ENCODE measurements at regions of chr3 and their contacts with region 1.

Region 1: GRCh38 chr3:161393803-161394202 is 22.5 kb upstream of the SPTSSB start:
- DNase-seq: no peak
- H3K4me3 Mint-ChIP-seq: no peak overlapping the region
- H3K27ac Mint-ChIP-seq: no peak overlapping the region
- H3K4me1 Mint-ChIP-seq: peaks cover 55% of the 10 kb centered on the region
- H3K27me3 Mint-ChIP-seq: no peaks in the 10 kb centered on the region

Region 2: GRCh38 chr3:160565442-160566403 is 828.1 kb before region 1 on chr3 and contains the start of gene KPNA4:
- CTCF ChIA-PET with region 1: no interaction called
- intact Hi-C with region 1: loop called (anchors 5 kb)
- DNase-seq: peak; percentile 97
- H3K4me3 Mint-ChIP-seq: peak within 1 kb of the TSS; percentile 93
- H3K27ac Mint-ChIP-seq: peak within 1 kb of the TSS; percentile 97
- H3K4me1 Mint-ChIP-seq: peaks cover 40% of the 10 kb centered on the region
- H3K27me3 Mint-ChIP-seq: no peaks in the 10 kb centered on the region
- total RNA-seq, gene KPNA4: 43.2 to 59.4 TPM

Region 3: DNA sequence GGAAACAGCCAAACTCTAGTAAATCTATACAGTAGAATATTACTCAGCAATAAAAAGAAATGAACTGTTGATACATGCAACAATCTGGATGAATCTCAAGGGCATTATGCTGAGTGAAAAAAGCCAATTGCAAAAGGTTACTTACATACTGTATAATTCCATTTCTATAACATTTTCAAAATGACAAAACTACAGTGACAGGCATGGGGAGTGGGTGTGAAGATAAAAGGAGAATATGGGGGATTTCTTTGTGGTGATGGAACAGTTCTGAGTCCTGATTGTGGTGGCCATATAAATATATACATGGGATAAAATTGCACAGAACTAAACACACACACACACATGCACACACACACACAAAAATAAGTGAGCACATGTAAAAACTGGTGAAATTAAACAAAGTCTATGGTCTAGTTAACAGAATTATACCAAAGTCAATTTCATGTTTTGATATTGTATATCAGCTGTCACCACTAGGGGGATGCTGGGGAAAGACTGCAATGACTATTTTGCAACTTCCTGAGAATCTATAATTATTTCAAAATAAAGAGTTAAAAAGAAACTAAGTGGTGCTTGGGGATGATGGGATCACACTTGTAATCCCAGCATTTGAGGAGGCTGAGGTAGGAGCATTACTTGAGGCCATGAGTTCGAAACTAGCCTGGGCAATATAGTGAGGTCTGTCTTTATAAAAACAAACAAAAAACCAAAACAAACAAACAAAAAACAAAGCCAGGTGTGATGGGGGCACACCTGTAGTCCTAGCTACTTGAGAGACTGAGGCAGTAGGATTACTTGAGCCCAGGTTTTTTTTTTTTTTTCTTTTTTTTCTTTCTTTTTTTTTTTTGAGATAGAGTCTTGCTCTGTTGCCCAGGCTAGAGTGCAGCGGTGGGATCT is 88.5 kb before region 1 on chr3:
- CTCF ChIA-PET with region 1: interaction called, 11 read pairs
- intact Hi-C with region 1: no loop called
- DNase-seq: peak; percentile 12
- H3K4me3 Mint-ChIP-seq: no peak overlapping the region
- H3K27ac Mint-ChIP-seq: no peak overlapping the region
- H3K4me1 Mint-ChIP-seq: peaks cover 22% of the 10 kb centered on the region
- H3K27me3 Mint-ChIP-seq: no peaks in the 10 kb centered on the region

Region 4: DNA sequence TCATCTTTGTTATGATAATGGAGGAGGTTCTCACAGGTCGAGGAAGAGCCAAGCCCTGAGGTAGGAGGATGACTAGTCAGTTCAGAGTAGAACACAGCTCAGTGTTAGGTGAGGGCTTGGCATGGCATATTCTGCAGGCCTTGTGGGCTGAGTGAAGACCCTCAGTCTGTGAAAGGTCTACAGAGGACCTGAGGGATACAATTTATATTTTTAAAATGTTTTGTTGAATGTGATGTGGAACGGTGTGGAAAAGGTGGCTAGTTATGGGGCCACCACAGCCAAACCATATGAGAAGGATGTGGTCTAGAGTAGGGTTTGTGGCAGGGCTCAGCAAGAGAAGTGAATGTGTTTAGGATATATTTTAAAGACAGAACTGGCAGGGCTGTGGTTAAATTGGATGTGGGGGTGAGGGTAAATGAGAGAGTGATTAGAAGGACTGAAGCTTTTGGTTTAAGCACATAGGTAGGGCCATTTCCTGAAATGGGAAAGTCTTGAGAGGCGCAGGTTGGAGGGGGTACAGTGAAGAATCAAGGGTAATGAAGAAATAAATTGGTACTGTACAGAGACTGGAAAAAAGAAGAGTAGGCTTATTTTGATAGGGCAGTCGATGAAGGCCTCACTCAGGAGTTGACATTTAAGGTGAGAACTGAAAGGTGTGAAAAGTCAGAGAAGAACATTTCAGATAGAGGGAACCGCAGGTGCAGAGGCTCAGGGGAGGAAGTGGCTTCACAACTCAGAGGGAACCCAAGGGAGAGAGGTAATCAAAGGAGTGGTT is 83.0 kb before region 1 on chr3:
- CTCF ChIA-PET with region 1: interaction called, 11 read pairs
- intact Hi-C with region 1: loop called (anchors 1 kb)
- DNase-seq: peak; percentile 69
- H3K4me3 Mint-ChIP-seq: no peak overlapping the region
- H3K27ac Mint-ChIP-seq: peak overlapping the region; percentile 43
- H3K4me1 Mint-ChIP-seq: peaks cover 49% of the 10 kb centered on the region
- H3K27me3 Mint-ChIP-seq: no peaks in the 10 kb centered on the region

Region 5: DNA sequence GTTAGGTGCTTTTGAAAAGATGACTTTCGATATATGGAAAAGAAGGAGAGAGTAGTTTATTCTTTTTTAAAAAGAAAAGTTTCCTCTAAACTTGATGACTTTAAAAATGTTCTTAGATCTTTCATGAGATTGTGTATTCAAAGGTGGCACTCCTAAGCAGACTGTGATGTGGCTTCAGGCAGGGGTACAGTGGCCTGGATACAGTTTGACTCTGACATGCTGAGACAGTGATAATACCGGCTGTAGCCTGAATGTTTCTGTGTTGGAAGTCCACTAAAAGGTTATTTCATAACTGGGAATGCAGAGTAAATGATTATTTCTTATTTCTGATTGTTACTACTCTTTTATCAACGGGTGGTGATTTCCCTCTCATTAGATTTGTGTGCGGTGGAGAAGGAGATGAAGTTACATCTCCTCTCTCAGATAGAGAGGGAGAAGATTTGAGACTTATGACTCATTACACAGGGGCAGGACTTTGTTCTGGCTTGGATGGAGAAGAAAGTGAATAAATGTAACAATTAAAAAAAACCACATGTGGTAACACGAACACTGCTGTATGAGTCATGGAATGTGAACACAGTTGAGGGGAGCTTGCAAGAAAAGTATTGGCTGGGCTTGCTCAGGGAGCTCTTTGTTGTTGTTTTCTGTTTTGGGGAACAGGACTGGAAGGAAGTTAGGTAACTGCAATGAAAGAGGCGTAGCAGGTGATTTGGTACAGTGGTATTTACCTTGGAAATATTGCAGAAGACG is 44.1 kb before region 1 on chr3:
- CTCF ChIA-PET with region 1: interaction called, 4 read pairs
- intact Hi-C with region 1: loop called (anchors 1 kb)
- DNase-seq: peak; percentile 47
- H3K4me3 Mint-ChIP-seq: no peak overlapping the region
- H3K27ac Mint-ChIP-seq: no peak overlapping the region
- H3K4me1 Mint-ChIP-seq: peaks cover 27% of the 10 kb centered on the region
- H3K27me3 Mint-ChIP-seq: no peaks in the 10 kb centered on the region

Region 6: DNA sequence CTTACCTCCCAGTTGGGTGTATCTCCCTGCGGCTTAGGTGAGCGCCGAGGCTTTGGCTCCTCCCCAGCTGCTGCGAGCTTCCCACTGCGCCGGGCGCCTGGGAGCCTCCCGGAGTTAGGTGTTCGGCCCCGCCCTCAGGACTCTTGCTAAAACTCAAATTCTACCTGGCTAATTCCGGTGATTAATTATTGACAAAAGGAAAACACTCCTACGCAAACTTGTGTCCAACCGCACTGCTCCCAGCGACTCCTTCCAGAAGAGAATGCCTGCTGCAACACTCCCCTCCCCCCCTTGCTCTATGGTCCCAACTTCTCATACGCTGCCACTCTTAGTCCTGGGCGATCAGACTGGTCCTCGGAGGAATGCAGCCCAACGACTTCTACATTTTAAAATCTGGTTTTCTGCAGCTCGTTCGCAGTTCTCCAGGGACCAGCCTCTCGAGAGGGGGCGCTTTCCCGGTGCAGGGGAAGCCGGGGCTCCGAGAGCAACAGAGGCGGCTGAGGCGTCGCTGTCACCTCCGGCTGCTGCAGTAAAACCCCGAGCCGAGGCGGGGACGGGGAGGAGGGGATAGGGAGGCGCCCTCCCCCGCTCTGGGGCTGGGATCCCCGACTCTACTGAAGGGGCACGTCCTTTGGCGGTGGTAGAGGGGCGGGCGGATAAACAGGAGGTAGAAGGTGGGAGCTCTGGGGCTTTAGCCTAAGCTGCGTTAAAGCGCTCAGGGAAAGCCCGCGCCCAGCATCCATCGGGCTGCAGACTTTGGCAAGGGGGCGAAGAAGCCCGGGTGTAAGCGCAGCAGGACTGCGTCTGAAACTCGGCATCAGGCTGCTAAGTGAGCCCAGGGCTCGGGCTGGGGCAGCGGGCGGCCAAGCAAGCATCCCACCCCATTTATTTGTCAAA is 22.1 kb before region 1 on chr3 and contains the start of gene SPTSSB:
- CTCF ChIA-PET with region 1: no interaction called
- intact Hi-C with region 1: loop called (anchors 1 kb)
- DNase-seq: peak; percentile 60
- H3K4me3 Mint-ChIP-seq: peak within 1 kb of the TSS; percentile 79
- H3K27ac Mint-ChIP-seq: no peak within 1 kb of the TSS
- H3K4me1 Mint-ChIP-seq: peaks cover 8% of the 10 kb centered on the region
- H3K27me3 Mint-ChIP-seq: peaks cover 22% of the 10 kb centered on the region
- total RNA-seq, gene SPTSSB: not detected

Region 7: GRCh38 chr3:161454615-161455014 is 60.8 kb after region 1 on chr3:
- CTCF ChIA-PET with region 1: no interaction called
- intact Hi-C with region 1: no loop called
- DNase-seq: no peak
- H3K4me3 Mint-ChIP-seq: no peak overlapping the region
- H3K27ac Mint-ChIP-seq: no peak overlapping the region
- H3K4me1 Mint-ChIP-seq: no peaks in the 10 kb centered on the region
- H3K27me3 Mint-ChIP-seq: no peaks in the 10 kb centered on the region

Region 8: DNA sequence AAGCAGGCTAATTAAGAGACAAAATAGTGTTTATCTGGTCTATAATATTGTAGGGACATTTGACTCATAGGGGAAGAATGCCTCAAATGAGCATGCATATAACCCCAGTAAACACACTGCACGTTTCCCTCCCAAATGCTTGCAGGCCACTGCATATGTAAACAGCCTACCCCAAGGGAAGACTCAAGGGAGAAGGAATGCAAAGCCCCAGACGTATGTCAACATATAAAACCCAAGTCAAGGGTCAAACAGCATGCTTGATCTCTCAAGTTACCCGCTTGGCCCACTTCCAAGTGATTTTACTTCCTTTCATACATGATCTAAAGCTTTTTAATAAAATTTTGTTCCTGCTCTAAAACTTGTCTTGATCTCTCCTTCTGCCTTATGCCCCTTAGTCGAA is 1192.8 kb after region 1 on chr3:
- CTCF ChIA-PET with region 1: no interaction called
- intact Hi-C with region 1: no loop called
- DNase-seq: no peak
- H3K4me3 Mint-ChIP-seq: no peak overlapping the region
- H3K27ac Mint-ChIP-seq: no peak overlapping the region
- H3K4me1 Mint-ChIP-seq: no peaks in the 10 kb centered on the region
- H3K27me3 Mint-ChIP-seq: no peaks in the 10 kb centered on the region

Measured in activated naive CD4-positive, alpha-beta T cell treated with anti-CD3 and anti-CD28 coated beads for 36 hours (primary cell).